Activated CD4-positive, alpha-beta T cell treated with anti-CD3 and anti-CD28 coated beads, Interleukin-2, amount 10 ng/mL, durations not matched to agents 7 days and 5 days (primary cell): ENCODE measurements at regions of chr6 and their contacts with region 1.

Region 1: DNA sequence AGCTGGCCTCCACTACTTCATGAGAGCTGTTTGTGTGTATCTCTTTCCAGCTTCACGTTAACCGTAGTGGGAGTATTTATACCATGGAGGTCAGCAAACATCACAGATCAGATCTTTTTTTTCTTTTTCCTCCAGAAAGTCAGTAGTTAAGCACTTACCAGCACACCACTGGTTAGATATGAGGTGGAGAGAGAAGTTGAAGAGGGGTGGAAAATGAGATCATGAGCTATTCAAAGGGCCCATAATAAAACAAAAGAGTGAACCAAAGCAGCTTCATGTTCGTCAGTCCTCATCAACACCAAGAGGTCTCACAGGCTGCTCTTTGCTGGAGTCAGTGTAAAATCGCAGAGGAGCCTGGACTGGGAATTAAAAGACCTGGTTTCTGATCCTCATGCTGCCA is 125.1 kb upstream of the SGK1 start:
- DNase-seq: no peak
- H3K4me3 Mint-ChIP-seq: no peak overlapping the region
- H3K27ac Mint-ChIP-seq: no peak overlapping the region
- H3K4me1 Mint-ChIP-seq: no peaks in the 10 kb centered on the region
- H3K27me3 Mint-ChIP-seq: peaks cover 2% of the 10 kb centered on the region

Region 2: GRCh38 chr6:134347916-134348805 is 94.8 kb before region 1 on chr6:
- CTCF ChIA-PET with region 1: no interaction called
- POLR2A ChIA-PET with region 1: no interaction called
- DNase-seq: no peak
- H3K4me3 Mint-ChIP-seq: no peak overlapping the region
- H3K27ac Mint-ChIP-seq: no peak overlapping the region
- H3K4me1 Mint-ChIP-seq: peaks cover 32% of the 10 kb centered on the region
- H3K27me3 Mint-ChIP-seq: no peaks in the 10 kb centered on the region

Region 3: DNA sequence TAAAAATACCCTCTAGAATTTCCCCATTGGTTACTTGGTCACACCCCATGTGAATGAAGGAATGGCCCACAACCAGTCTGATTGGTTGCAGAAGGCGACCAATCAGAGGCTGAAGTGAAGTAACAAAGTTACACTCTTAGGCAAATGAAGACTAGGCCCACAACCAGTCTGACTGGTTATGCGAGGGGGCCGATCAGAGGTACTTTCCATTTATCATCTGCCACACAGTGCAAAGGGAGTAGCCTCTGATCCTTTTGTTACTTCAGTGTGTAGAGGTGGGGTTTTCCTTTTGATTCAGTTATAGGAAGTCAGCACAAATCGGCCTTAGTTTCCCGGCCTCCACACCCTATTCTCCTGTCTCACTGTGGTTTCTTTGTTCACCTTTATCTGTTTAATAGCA is 63.9 kb before region 1 on chr6:
- CTCF ChIA-PET with region 1: no interaction called
- POLR2A ChIA-PET with region 1: no interaction called
- DNase-seq: no peak
- H3K4me3 Mint-ChIP-seq: no peak overlapping the region
- H3K27ac Mint-ChIP-seq: no peak overlapping the region
- H3K4me1 Mint-ChIP-seq: peaks cover 29% of the 10 kb centered on the region
- H3K27me3 Mint-ChIP-seq: no peaks in the 10 kb centered on the region

Region 4: GRCh38 chr6:134453870-134454510 is 11.0 kb after region 1 on chr6:
- CTCF ChIA-PET with region 1: interaction called, 10 read pairs
- POLR2A ChIA-PET with region 1: no interaction called
- DNase-seq: no peak
- H3K4me3 Mint-ChIP-seq: no peak overlapping the region
- H3K27ac Mint-ChIP-seq: no peak overlapping the region
- H3K4me1 Mint-ChIP-seq: peaks cover 4% of the 10 kb centered on the region
- H3K27me3 Mint-ChIP-seq: no peaks in the 10 kb centered on the region

Region 5: GRCh38 chr6:134517145-134517658 is 74.2 kb after region 1 on chr6:
- CTCF ChIA-PET with region 1: no interaction called
- POLR2A ChIA-PET with region 1: no interaction called
- DNase-seq: no peak
- H3K4me3 Mint-ChIP-seq: no peak overlapping the region
- H3K27ac Mint-ChIP-seq: no peak overlapping the region
- H3K4me1 Mint-ChIP-seq: peaks cover 21% of the 10 kb centered on the region
- H3K27me3 Mint-ChIP-seq: no peaks in the 10 kb centered on the region

Region 6: DNA sequence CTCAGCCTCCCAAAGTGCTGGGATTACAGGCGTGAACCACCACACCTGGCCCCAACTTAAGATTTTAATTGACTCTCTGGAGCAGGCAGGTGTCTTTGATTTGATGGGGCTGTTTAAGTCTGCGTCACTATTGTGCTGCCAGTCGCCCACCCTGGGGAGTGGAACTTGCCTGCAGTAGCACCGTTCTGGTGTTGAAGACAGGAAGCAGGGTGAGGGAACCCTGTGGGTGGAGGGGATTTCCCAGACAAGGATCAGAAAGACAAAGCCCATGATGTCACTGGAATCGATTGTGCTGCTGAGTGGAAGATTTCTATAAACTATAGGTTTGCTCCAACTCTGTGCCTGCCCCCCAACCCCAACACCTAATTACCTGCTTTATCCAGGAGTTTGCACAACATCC is 495.9 kb after region 1 on chr6:
- CTCF ChIA-PET with region 1: no interaction called
- POLR2A ChIA-PET with region 1: no interaction called
- DNase-seq: peak; percentile 34
- H3K4me3 Mint-ChIP-seq: no peak overlapping the region
- H3K27ac Mint-ChIP-seq: no peak overlapping the region
- H3K4me1 Mint-ChIP-seq: peaks cover 14% of the 10 kb centered on the region
- H3K27me3 Mint-ChIP-seq: no peaks in the 10 kb centered on the region